ENCODE measurements at regions of chr14 and their contacts with region 1.

Region 1: GRCh38 chr14:62117010-62117750 is 355.0 kb downstream of the SNAPC1 start:
- DNase-seq: peak; percentile 86
- ATAC-seq: peak; percentile 97
- H3K4me3 ChIP-seq: peak overlapping the region; percentile 52 to 82 (median 65)
- H3K4me3 Mint-ChIP-seq: peak overlapping the region; percentile 93
- H3K27ac ChIP-seq: peak overlapping the region in 1 of 2 donors; percentile 42
- H3K27ac Mint-ChIP-seq: peak overlapping the region; percentile 47
- H3K4me1 ChIP-seq: peaks cover 27 to 36% of the 10 kb centered on the region in 2 donors
- H3K4me1 Mint-ChIP-seq: peaks cover 38% of the 10 kb centered on the region
- H3K27me3 ChIP-seq: peaks cover 0 to 12% (median 0%) of the 10 kb centered on the region in 4 experiments
- H3K27me3 Mint-ChIP-seq: peaks cover 9% of the 10 kb centered on the region
- CTCF ChIP-seq: peak; percentile 69

Region 2: DNA sequence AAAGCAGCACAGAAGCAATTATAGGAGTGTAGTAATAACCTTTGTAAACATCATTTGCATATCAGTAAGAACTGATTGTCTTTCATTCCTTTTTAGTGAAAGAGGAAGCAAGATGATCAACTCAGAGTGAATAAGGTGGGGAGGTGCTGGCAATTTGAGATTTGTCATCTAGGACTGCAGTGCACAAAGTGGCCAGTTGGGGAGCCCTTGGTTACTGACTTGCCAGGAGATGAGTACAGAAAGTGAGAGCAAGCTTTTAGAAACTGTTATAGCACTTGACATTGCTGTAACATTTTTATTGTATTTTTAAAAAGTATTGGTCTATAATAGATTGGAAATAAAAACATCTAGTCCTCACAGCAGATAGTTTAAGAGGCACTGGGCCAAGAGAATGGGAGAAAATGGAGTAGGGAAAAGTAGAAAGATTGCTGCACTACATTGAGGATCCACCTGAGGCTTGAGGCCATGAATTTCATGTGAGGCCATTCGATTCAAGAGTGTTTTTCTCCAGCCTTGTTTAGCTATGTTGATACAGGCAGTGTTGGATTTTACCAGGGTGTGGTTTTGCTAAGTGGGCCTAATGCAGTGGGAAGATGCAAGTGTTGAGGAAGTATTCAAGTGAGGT is 256.8 kb before region 1 on chr14:
- CTCF ChIA-PET with region 1: interaction called, 7 read pairs
- POLR2A ChIA-PET with region 1: no interaction called
- intact Hi-C with region 1: loop called (anchors 1 kb)
- DNase-seq: peak; percentile 80
- ATAC-seq: peak; percentile 100
- H3K4me3 ChIP-seq: no peak overlapping the region
- H3K4me3 Mint-ChIP-seq: no peak overlapping the region
- H3K27ac ChIP-seq: no peak overlapping the region
- H3K27ac Mint-ChIP-seq: no peak overlapping the region
- H3K4me1 ChIP-seq: peaks cover 4 to 7% of the 10 kb centered on the region in 2 donors
- H3K4me1 Mint-ChIP-seq: peaks cover 10% of the 10 kb centered on the region
- H3K27me3 ChIP-seq: peaks cover 0 to 3% (median 0%) of the 10 kb centered on the region in 4 experiments
- H3K27me3 Mint-ChIP-seq: peaks cover 14% of the 10 kb centered on the region
- CTCF ChIP-seq: peak; percentile 90

Region 3: GRCh38 chr14:61894452-61895077 is 222.6 kb before region 1 on chr14:
- CTCF ChIA-PET with region 1: interaction called, 11 read pairs
- POLR2A ChIA-PET with region 1: no interaction called
- intact Hi-C with region 1: no loop called
- DNase-seq: peak; percentile 70
- ATAC-seq: no peak
- H3K4me3 ChIP-seq: no peak overlapping the region
- H3K4me3 Mint-ChIP-seq: no peak overlapping the region
- H3K27ac ChIP-seq: no peak overlapping the region
- H3K27ac Mint-ChIP-seq: peak overlapping the region; percentile 18
- H3K4me1 ChIP-seq: peaks cover 24 to 36% of the 10 kb centered on the region in 2 donors
- H3K4me1 Mint-ChIP-seq: peaks cover 36% of the 10 kb centered on the region
- H3K27me3 ChIP-seq: no peaks in the 10 kb centered on the region
- H3K27me3 Mint-ChIP-seq: no peaks in the 10 kb centered on the region
- CTCF ChIP-seq: peak; percentile 86

Region 4: GRCh38 chr14:61925043-61925442 is 192.1 kb before region 1 on chr14:
- CTCF ChIA-PET with region 1: interaction called, 18 read pairs
- POLR2A ChIA-PET with region 1: no interaction called
- intact Hi-C with region 1: no loop called
- DNase-seq: peak; percentile 70
- ATAC-seq: peak; percentile 65
- H3K4me3 ChIP-seq: no peak overlapping the region
- H3K4me3 Mint-ChIP-seq: no peak overlapping the region
- H3K27ac ChIP-seq: no peak overlapping the region
- H3K27ac Mint-ChIP-seq: peak overlapping the region; percentile 23
- H3K4me1 ChIP-seq: peaks cover 3 to 8% of the 10 kb centered on the region in 2 donors
- H3K4me1 Mint-ChIP-seq: peaks cover 29% of the 10 kb centered on the region
- H3K27me3 ChIP-seq: peaks cover 0 to 4% (median 0%) of the 10 kb centered on the region in 4 experiments
- H3K27me3 Mint-ChIP-seq: peaks cover 3% of the 10 kb centered on the region
- CTCF ChIP-seq: peak; percentile 66

Region 5: DNA sequence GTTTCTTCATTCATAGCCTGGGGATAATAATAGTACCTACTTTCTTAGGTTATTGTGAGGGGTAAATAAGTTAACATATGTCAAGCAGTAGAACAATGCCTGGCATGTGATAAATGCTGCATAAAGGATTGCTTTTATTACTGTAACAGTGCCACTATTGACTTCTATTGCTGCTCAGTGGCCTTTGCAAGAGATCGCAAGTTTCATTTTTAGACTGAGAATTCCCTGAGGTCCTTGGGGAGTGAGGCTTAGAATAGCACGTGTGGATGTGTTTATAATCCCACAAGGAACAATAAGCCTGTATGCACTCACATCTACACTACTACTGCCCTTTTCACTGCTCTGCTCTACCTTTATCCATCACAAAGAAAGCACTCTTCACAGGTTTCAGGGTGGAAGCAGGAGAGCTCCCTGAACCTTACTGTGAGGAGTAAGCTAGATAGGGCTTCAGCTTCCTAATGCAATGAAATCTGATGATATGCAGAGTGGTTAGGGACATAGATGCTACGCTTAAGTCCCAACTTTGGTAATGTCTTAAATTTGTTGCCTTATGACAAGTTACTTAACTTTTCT is 52.3 kb before region 1 on chr14:
- CTCF ChIA-PET with region 1: interaction called, 7 read pairs
- POLR2A ChIA-PET with region 1: no interaction called
- intact Hi-C with region 1: loop called (anchors 10 kb)
- DNase-seq: no peak
- ATAC-seq: no peak
- H3K4me3 ChIP-seq: no peak overlapping the region
- H3K4me3 Mint-ChIP-seq: no peak overlapping the region
- H3K27ac ChIP-seq: no peak overlapping the region
- H3K27ac Mint-ChIP-seq: no peak overlapping the region
- H3K4me1 ChIP-seq: peaks cover 19 to 25% of the 10 kb centered on the region in 2 donors
- H3K4me1 Mint-ChIP-seq: peaks cover 23% of the 10 kb centered on the region
- H3K27me3 ChIP-seq: no peaks in the 10 kb centered on the region
- H3K27me3 Mint-ChIP-seq: no peaks in the 10 kb centered on the region
- CTCF ChIP-seq: no peak

Region 6: DNA sequence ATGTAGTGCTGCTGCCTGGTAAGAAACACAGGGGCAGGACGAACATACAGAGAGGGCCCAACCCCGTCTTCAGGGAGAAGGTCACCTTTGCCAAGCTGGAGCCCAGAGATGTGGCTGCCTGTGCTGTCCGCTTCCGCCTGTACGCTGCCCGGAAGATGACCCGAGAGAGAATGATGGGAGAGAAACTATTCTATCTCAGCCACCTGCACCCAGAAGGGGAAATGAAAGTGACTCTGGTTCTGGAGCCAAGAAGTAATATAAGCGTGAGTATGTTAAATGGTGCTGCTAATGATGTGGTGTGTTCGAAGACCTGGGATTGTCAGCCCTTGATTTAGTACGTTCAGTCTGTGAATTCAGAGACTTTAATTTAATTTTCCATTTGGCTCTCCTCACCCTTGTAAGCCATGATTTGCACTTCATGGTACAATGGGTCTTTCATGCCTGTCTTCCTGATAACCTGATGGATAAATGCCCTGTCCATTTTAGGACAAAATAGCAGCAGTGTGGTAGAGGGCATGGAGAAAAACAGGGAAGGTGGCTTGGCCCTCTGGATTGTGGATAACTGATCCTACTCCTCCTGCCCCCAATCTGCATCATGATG is 36.1 kb before region 1 on chr14:
- CTCF ChIA-PET with region 1: interaction called, 55 read pairs
- POLR2A ChIA-PET with region 1: interaction called, 4 read pairs
- intact Hi-C with region 1: loop called (anchors 1 kb)
- DNase-seq: peak; percentile 84
- ATAC-seq: peak; percentile 79
- H3K4me3 ChIP-seq: peak overlapping the region in 3 of 5 experiments; percentile 2 to 43 (median 25)
- H3K4me3 Mint-ChIP-seq: peak overlapping the region; percentile 58
- H3K27ac ChIP-seq: peak overlapping the region; percentile 82 to 94
- H3K27ac Mint-ChIP-seq: peak overlapping the region; percentile 88
- H3K4me1 ChIP-seq: peaks cover 74% of the 10 kb centered on the region in 2 donors
- H3K4me1 Mint-ChIP-seq: peaks cover 79% of the 10 kb centered on the region
- H3K27me3 ChIP-seq: no peaks in the 10 kb centered on the region
- H3K27me3 Mint-ChIP-seq: no peaks in the 10 kb centered on the region
- CTCF ChIP-seq: no peak

Region 7: GRCh38 chr14:62097824-62098223 is 19.4 kb before region 1 on chr14:
- CTCF ChIA-PET with region 1: interaction called, 12 read pairs
- POLR2A ChIA-PET with region 1: interaction called, 7 read pairs
- intact Hi-C with region 1: no loop called
- DNase-seq: no peak
- ATAC-seq: no peak
- H3K4me3 ChIP-seq: no peak overlapping the region
- H3K4me3 Mint-ChIP-seq: no peak overlapping the region
- H3K27ac ChIP-seq: no peak overlapping the region
- H3K27ac Mint-ChIP-seq: no peak overlapping the region
- H3K4me1 ChIP-seq: peaks cover 7 to 9% of the 10 kb centered on the region in 2 donors
- H3K4me1 Mint-ChIP-seq: peaks cover 13% of the 10 kb centered on the region
- H3K27me3 ChIP-seq: no peaks in the 10 kb centered on the region
- H3K27me3 Mint-ChIP-seq: no peaks in the 10 kb centered on the region
- CTCF ChIP-seq: no peak